GM23248 (cell line): ENCODE measurements at regions of chr11 and their contacts with region 1.

Region 1: GRCh38 chr11:130213143-130213978 is 53.8 kb downstream of the ST14 start:
- DNase-seq: peak; percentile 60
- H3K4me3 ChIP-seq: no peak overlapping the region
- H3K27ac ChIP-seq: no peak overlapping the region
- H3K4me1 ChIP-seq: no peaks in the 10 kb centered on the region
- H3K27me3 ChIP-seq: peaks cover 19% of the 10 kb centered on the region; the same call in 1 of the 2 replicates

Region 2: GRCh38 chr11:130383344-130384211 is 170.2 kb after region 1 on chr11:
- in situ Hi-C with region 1: loop called (anchors 10 kb)
- DNase-seq: peak; percentile 40
- H3K4me3 ChIP-seq: no peak overlapping the region
- H3K27ac ChIP-seq: no peak overlapping the region
- H3K4me1 ChIP-seq: peaks cover 9% of the 10 kb centered on the region; the same call in 1 of the 2 replicates
- H3K27me3 ChIP-seq: no peaks in the 10 kb centered on the region

Region 3: DNA sequence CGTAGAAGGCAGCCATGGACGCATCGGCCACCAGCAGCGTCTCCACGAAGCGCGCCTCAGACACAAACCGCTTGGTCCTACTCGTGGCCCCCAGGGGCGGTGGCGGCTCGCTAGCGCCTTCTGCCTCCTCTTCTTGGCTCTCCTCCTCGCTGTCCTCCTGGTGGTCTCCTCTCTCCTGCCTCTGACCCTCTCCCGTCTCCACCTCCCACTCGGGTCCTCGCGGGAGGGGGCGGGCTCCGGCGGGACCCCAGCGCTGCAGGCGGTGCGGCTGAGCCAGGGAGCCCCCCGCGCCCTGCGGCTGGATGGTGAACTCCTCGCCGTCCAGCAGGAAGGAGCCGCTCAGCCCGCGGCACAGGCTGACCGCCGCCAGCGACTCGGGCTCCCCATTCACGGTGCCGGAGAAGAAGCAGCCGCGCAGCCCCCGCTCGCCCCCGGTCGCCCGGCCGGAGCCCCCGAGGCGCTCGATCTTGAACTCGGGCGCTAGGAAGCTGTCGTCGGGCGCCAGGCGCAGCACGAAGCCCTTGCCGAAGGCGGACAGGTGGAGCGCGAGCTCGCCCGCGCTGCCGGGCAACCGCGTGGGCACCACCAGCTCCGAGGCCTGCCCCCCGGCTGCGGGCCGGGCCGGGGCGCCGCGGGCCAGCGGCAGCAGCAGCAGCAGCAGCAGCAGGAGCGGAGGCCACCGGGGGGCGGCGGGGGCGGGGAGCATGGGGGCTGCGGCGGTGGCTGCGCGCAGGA is 214.4 kb after region 1 on chr11:
- in situ Hi-C with region 1: loop called (anchors 10 kb)
- DNase-seq: peak; percentile 58
- H3K4me3 ChIP-seq: peak overlapping the region; percentile 53
- H3K27ac ChIP-seq: no peak overlapping the region
- H3K4me1 ChIP-seq: peaks cover 4% of the 10 kb centered on the region
- H3K27me3 ChIP-seq: peaks cover 36% of the 10 kb centered on the region

Region 4: GRCh38 chr11:130861902-130862860 is 648.8 kb after region 1 on chr11:
- in situ Hi-C with region 1: loop called (anchors 10 kb)
- DNase-seq: peak; percentile 91
- H3K4me3 ChIP-seq: no peak overlapping the region
- H3K27ac ChIP-seq: no peak overlapping the region
- H3K4me1 ChIP-seq: no peaks in the 10 kb centered on the region
- H3K27me3 ChIP-seq: no peaks in the 10 kb centered on the region